ENCODE measurements at regions of chr10 and their contacts with region 1.

Region 1: DNA sequence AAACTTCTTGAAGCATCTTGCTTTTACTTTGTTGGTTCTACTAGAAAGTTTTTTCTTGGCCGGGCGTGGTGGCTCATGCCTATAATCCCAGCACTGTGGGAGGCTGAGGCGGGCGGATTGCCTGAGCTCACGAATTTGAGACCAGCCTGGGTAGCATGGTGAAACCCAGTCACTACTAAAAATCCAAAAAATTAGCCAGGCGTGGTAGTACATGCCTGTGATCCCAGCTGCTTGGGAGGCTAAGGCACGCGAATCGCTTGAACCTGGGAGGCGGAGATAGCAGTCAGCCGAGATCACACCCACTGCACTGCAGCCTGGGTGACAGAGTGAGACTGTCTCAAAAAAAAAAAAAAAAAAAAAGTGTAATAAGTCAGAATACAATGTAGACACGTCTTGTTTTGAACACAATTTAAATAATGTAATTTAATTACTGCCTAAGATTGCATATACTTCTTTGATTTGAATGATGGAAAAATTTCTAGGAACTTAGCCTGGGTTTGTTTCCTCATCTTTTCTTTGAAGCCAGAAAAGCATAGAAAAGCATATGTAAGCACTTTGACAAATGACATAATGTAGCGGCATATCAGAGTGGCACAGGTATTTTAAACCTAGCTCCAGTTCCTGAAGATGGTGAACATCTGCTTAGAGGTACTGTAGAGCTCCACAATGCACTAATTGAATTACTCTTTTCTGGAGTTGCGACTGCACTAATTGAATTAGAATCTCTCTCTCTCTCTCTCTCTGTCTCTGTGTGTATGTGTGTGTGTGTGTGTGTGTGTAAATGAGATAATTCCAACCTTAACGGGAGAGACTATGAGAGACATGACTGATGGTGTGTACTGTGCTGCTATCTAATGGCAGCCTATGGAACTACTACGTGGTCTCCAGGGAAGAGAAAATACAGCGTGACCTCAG is 87.8 kb downstream of the BTRC start:
- DNase-seq: peak; percentile 79

Region 2: DNA sequence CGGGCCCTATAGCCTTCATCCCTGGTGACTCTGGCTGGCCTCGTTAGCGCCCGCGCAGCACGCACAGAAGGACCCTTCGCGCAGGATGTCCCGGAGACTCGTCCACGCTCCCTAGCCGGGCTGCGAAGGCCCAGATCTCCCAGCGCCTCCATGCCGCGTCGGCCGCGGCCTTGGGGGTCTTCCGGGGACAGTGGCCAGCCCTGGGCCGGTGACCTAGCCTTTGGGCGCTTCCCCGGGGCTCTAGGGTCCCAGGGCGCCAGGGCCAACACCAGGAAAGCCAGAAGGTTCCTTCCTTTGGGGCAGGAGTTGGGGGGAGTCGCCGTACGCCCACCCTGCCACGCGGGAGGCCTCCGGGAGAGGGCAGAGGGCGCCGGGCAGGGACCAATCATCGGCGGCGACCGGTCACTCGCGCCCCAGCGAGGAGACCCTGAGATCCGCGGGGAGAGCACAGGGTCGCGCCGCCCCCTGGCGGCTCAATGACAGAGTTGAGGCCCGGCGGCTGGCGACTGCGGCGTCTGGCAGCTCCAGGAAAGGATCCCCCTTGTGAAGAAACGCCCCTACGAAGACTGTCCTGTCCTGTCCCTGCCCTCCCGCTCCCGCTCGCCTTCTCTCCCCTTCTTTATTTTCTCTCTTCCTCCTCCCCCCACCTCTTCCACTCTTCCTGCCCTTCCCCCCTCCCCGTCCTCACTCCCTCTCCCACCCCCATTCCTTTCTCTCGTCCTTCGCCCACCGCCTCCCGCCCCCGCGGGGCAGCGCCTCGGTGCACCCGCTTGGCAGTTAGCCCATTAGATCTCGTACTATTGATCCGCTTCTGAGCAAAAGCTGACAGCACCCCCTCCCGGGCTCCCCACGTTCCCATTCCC is 150.2 kb before region 1 on chr10:
- CTCF ChIA-PET with region 1: interaction called, 22 read pairs
- POLR2A ChIA-PET with region 1: interaction called, 3 read pairs
- DNase-seq: peak; percentile 91

Region 3: DNA sequence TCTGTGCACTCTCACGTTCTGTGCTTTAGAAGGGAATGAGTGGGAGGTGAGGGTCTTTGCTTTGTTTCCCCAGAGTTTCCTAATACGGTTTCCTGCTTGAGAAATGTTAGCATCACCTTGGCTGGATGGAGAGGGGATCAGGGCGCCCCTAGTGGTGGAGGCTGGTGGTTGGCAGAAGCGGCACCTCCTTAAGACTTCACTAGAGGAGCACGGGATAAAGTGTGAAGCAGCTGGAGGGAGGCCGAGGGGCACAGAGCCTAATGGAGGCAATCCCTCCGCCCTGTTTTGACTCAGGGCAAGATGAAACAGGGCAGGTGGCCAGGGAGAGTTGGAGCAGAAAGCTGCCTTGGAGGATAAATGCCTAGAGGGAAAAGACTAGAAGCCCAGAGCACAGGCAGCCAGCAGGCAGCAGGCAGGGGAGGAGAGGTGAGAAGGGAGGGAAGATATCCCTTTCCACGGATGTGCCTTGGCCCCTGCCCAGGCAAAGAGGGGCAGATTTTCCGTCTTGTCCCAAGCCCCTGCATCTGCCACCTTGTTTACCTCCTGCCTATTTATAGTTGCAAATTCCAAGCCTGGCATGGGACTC is 143.8 kb before region 1 on chr10:
- CTCF ChIA-PET with region 1: interaction called, 22 read pairs
- POLR2A ChIA-PET with region 1: no interaction called
- DNase-seq: peak; percentile 83

Region 4: DNA sequence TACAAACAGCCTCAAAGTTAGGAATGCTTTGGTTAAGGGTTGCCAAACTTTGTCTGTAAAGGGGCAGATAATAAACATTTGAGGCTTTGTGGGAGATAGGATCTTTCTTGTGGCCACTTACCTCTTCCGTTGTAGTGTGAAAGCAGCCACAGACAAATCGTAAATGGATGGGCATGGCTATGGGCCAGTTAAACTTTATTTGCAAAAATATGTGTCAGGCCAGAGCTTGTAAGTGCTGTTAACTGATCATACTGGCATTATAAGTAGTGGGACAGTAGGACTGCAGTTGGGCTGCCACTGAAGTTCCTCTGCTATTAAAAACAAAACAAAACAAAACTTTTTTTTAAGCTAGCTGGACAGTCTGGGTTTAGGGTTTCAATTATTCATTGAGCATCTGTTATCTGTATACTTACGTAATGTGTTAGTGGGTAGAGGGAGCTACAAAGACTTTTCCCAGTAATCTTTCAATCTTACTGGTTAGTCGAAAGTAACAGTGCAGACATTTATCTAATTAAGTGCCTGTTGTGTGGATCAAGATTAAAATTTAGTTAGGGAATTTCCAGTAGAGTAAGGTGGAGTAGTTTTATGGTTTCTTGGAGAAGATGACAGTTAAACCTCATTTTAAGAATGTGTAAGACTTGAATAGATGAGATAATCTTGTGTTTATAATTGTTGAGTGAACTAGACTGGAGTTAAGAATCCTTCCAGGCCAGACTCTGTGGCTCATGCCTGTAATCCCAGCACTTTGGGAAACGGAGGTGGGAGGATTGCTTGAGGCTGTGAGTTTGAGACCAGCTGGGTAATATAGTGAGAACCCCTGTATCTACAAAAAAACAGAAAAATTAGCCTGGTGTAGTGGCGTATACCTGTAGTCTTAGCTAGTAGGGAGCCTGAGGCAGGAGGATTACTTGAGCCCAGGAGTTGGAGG is 12.3 kb after region 1 on chr10:
- CTCF ChIA-PET with region 1: interaction called, 12 read pairs
- POLR2A ChIA-PET with region 1: interaction called, 3 read pairs
- DNase-seq: no peak